ENCODE measurements at regions of chr1 and their contacts with region 1.

Region 1: DNA sequence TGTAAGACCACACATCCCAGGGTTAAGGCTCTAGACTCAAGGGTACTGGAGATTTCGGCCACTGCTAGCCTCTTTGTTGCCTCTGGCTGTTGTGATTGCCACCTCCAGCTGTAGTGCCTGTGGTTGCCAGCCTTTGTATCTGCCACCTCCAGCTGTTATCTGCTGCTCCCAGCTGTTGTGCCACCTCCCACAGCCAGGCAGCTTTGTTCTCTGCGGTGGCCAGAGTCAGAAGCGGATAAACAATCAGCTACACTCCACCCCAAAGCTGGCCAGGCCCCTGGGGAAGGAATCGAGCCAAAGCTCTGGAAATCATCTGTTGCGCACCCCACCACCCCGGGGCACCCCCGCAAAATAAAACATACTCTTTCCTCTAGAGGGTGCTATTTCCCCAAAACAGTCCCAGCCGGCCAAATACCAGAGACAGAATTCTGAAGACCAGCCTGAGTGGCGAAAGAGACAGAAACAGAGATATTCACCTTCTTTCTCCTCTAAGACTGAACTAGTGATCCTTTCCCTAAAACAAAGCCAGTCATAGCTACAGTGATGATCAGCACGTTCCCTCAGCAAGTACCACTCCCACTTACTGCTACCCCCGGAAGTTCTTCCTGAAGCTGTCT is 14.8 kb upstream of the PIGM start:
- DNase-seq: peak in 8 of 9 donors; percentile 24 to 66 (median 44)
- ATAC-seq: peak; percentile 89
- H3K4me3 ChIP-seq: no peak overlapping the region
- H3K4me3 Mint-ChIP-seq: peak overlapping the region; percentile 62 to 86 (median 82)
- H3K27ac ChIP-seq: no peak overlapping the region
- H3K27ac Mint-ChIP-seq: peak overlapping the region in 5 of 9 donors; percentile 18 to 65 (median 43)
- H3K4me1 ChIP-seq: peaks cover 0 to 8% of the 10 kb centered on the region in 2 donors
- H3K4me1 Mint-ChIP-seq: peaks cover 7 to 16% (median 12%) of the 10 kb centered on the region in 7 donors
- H3K27me3 ChIP-seq: no peaks in the 10 kb centered on the region
- H3K27me3 Mint-ChIP-seq: peaks cover 0 to 32% (median 16%) of the 10 kb centered on the region in 5 donors

Region 2: GRCh38 chr1:160078512-160079195 is 32.1 kb after region 1 on chr1:
- CTCF ChIA-PET with region 1: interaction called, 71 read pairs
- POLR2A ChIA-PET with region 1: no interaction called
- intact Hi-C with region 1: loop called in 1 of 2 experiments (anchors 1 kb)
- DNase-seq: peak; percentile 32 to 64 (median 53)
- ATAC-seq: peak; percentile 91
- H3K4me3 ChIP-seq: no peak overlapping the region
- H3K4me3 Mint-ChIP-seq: no peak overlapping the region
- H3K27ac ChIP-seq: no peak overlapping the region
- H3K27ac Mint-ChIP-seq: peak overlapping the region in 1 of 9 donors; percentile 4
- H3K4me1 ChIP-seq: peaks cover 0 to 2% of the 10 kb centered on the region in 2 donors
- H3K4me1 Mint-ChIP-seq: peaks cover 0 to 10% (median 8%) of the 10 kb centered on the region in 7 donors
- H3K27me3 ChIP-seq: peaks cover 17% of the 10 kb centered on the region in 2 donors
- H3K27me3 Mint-ChIP-seq: peaks cover 52 to 77% (median 65%) of the 10 kb centered on the region in 5 donors

Region 3: GRCh38 chr1:160219062-160219929 is 172.7 kb after region 1 on chr1:
- CTCF ChIA-PET with region 1: no interaction called
- POLR2A ChIA-PET with region 1: no interaction called
- intact Hi-C with region 1: loop called in 1 of 2 experiments (anchors 1 kb)
- DNase-seq: no peak
- ATAC-seq: no peak
- H3K4me3 ChIP-seq: no peak overlapping the region
- H3K4me3 Mint-ChIP-seq: no peak overlapping the region
- H3K27ac ChIP-seq: no peak overlapping the region
- H3K27ac Mint-ChIP-seq: peak overlapping the region in 4 of 9 donors; percentile 28 to 56 (median 45)
- H3K4me1 ChIP-seq: no peaks in the 10 kb centered on the region
- H3K4me1 Mint-ChIP-seq: no peaks in the 10 kb centered on the region
- H3K27me3 ChIP-seq: no peaks in the 10 kb centered on the region
- H3K27me3 Mint-ChIP-seq: no peaks in the 10 kb centered on the region

Region 4: GRCh38 chr1:160437432-160438316 is 391.1 kb after region 1 on chr1:
- CTCF ChIA-PET with region 1: no interaction called
- POLR2A ChIA-PET with region 1: no interaction called
- intact Hi-C with region 1: no loop called
- DNase-seq: peak in 6 of 9 donors; percentile 30 to 57 (median 41)
- ATAC-seq: peak; percentile 85
- H3K4me3 ChIP-seq: peak overlapping the region; percentile 59
- H3K4me3 Mint-ChIP-seq: peak overlapping the region; percentile 77 to 94 (median 82)
- H3K27ac ChIP-seq: peak overlapping the region; percentile 80
- H3K27ac Mint-ChIP-seq: peak overlapping the region; percentile 91 to 99 (median 96)
- H3K4me1 ChIP-seq: peaks cover 11 to 33% of the 10 kb centered on the region in 2 donors
- H3K4me1 Mint-ChIP-seq: peaks cover 22 to 53% (median 46%) of the 10 kb centered on the region in 7 donors
- H3K27me3 ChIP-seq: no peaks in the 10 kb centered on the region
- H3K27me3 Mint-ChIP-seq: no peaks in the 10 kb centered on the region